ENCODE measurements at regions of chr17 and their contacts with region 1.

Region 1: GRCh38 chr17:42221937-42222745 is 27.8 kb upstream of the GHDC start:
- DNase-seq: peak; percentile 79
- ATAC-seq: peak; percentile 97
- H3K4me3 Mint-ChIP-seq: no peak overlapping the region
- H3K27ac Mint-ChIP-seq: peak overlapping the region; percentile 7
- H3K4me1 Mint-ChIP-seq: peaks cover 8% of the 10 kb centered on the region
- H3K27me3 Mint-ChIP-seq: no peaks in the 10 kb centered on the region
- CTCF ChIP-seq: peak; percentile 79

Region 2: GRCh38 chr17:42112552-42113176 is 109.5 kb before region 1 on chr17 and contains the start of gene DHX58:
- CTCF ChIA-PET with region 1: no interaction called
- POLR2A ChIA-PET with region 1: no interaction called
- intact Hi-C with region 1: no loop called
- DNase-seq: peak; percentile 89
- ATAC-seq: peak; percentile 82
- H3K4me3 Mint-ChIP-seq: peak within 1 kb of the TSS; percentile 79
- H3K27ac Mint-ChIP-seq: peak within 1 kb of the TSS; percentile 92
- H3K4me1 Mint-ChIP-seq: peaks cover 30% of the 10 kb centered on the region
- H3K27me3 Mint-ChIP-seq: no peaks in the 10 kb centered on the region
- CTCF ChIP-seq: no peak
- total RNA-seq, gene DHX58: 31.7 to 36.2 TPM

Region 3: GRCh38 chr17:42193969-42194899 is 27.9 kb before region 1 on chr17 and contains the start of gene GHDC:
- CTCF ChIA-PET with region 1: interaction called, 11 read pairs
- POLR2A ChIA-PET with region 1: interaction called, 3 read pairs
- intact Hi-C with region 1: no loop called
- DNase-seq: peak; percentile 90
- ATAC-seq: peak; percentile 98
- H3K4me3 Mint-ChIP-seq: peak within 1 kb of the TSS; percentile 88
- H3K27ac Mint-ChIP-seq: peak within 1 kb of the TSS; percentile 91
- H3K4me1 Mint-ChIP-seq: peaks cover 17% of the 10 kb centered on the region
- H3K27me3 Mint-ChIP-seq: no peaks in the 10 kb centered on the region
- CTCF ChIP-seq: no peak
- total RNA-seq, gene GHDC: 12.3 to 14.9 TPM

Region 4: GRCh38 chr17:42248351-42249179 is 26.4 kb after region 1 on chr17:
- CTCF ChIA-PET with region 1: interaction called, 25 read pairs
- POLR2A ChIA-PET with region 1: interaction called, 5 read pairs
- intact Hi-C with region 1: no loop called
- DNase-seq: peak; percentile 88
- ATAC-seq: peak; percentile 86
- H3K4me3 Mint-ChIP-seq: peak overlapping the region; percentile 77
- H3K27ac Mint-ChIP-seq: peak overlapping the region; percentile 98
- H3K4me1 Mint-ChIP-seq: peaks cover 69% of the 10 kb centered on the region
- H3K27me3 Mint-ChIP-seq: no peaks in the 10 kb centered on the region
- CTCF ChIP-seq: no peak

Region 5: DNA sequence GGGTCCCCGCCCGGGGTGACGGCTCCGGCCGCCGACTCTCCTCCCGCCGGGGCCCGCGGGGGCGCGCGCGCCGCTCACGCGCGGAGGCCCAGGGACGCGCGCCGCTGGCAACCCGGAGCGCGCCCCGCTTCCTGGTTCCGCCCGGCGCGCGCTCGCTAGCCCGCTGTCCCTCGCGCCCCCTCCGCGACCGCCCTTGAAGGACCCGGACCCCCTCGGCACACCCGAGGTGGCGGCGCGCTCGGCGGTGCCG is 54.1 kb after region 1 on chr17 and contains the start of gene STAT5B:
- CTCF ChIA-PET with region 1: interaction called, 37 read pairs
- POLR2A ChIA-PET with region 1: interaction called, 6 read pairs
- intact Hi-C with region 1: loop called (anchors 5 kb)
- DNase-seq: peak; percentile 64
- ATAC-seq: peak; percentile 65
- H3K4me3 Mint-ChIP-seq: peak within 1 kb of the TSS; percentile 97
- H3K27ac Mint-ChIP-seq: peak within 1 kb of the TSS; percentile 96
- H3K4me1 Mint-ChIP-seq: peaks cover 40% of the 10 kb centered on the region
- H3K27me3 Mint-ChIP-seq: no peaks in the 10 kb centered on the region
- CTCF ChIP-seq: no peak
- total RNA-seq, gene STAT5B: 128 to 129 TPM

Region 6: DNA sequence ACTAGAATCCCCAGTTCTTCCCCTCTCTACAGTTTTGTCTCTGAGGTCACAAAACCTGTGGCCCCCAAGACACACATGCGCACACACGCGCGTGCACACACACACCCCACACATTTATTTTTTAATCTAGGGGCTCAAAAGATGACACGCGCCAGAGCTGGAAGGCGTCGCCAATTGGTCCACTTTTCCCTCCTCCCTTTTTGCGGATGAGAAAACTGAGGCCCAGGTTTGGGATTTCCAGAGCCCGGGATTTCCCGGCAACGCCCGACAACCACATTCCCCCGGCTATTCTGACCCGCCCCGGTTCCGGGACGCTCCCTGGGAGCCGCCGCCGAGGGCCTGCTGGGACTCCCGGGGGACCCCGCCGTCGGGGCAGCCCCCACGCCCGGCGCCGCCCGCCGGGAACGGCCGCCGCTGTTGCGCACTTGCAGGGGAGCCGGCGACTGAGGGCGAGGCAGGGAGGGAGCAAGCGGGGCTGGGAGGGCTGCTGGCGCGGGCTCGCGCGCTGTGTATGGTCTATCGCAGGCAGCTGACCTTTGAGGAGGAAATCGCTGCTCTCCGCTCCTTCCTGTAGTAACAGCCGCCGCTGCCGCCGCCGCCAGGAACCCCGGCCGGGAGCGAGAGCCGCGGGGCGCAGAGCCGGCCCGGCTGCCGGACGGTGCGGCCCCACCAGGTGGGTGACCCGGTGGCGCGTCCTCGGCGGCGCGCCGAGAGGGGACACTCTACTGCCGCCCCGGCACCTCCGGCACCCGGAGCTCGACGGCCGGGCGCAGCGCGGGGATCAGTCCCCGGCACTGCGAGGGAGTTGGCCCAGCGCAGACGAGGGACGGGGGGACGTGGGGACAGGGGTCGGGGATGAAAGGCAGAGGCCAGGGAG is 66.0 kb after region 1 on chr17 and contains the start of gene STAT5A:
- CTCF ChIA-PET with region 1: interaction called, 32 read pairs
- POLR2A ChIA-PET with region 1: interaction called, 5 read pairs
- intact Hi-C with region 1: no loop called
- DNase-seq: peak; percentile 90
- ATAC-seq: peak; percentile 76
- H3K4me3 Mint-ChIP-seq: peak within 1 kb of the TSS; percentile 84
- H3K27ac Mint-ChIP-seq: peak within 1 kb of the TSS; percentile 94
- H3K4me1 Mint-ChIP-seq: peaks cover 54% of the 10 kb centered on the region
- H3K27me3 Mint-ChIP-seq: no peaks in the 10 kb centered on the region
- CTCF ChIP-seq: no peak
- total RNA-seq, gene STAT5A: 163 to 190 TPM

Region 7: DNA sequence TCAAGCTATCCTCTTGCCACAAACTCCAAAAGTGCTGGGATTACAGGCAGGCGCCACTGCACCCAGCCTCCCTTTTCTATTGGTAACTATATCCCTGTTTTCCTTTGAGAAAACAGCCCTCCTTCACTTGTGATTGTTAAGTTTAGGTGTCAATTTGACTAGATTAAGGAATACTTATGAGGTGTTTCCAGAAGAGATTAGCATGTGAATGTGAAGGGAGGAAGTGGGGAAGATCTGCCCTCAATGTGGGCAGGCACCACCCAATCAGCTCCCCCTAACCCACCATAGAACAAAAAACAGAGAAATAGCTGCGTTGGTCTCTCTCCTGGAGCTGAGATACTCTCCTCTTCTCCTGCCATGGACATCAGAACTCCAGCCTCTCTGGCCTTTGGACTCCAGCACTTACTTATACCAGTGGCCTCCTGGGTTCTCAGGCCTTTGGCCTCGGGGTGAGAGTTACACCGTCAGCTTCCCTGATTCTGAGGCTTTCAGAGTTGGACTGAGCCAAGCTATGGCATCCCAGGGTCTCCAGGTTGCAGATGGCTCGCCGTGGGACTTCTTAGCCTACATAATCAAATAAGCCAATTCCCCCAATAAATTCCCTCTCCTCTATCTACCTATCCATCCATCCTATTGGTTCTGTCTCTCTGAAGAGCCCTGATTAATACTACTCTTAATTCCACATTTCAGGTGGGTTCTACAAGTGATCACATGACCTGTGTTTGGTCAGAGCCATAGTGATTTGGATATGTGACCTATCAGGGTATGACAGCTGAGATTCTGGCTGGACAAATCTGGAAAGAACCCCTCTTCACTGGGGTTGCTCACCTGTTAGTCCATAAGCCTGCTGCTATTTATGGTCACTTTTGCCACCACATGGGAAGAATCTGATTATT is 178.1 kb after region 1 on chr17:
- CTCF ChIA-PET with region 1: interaction called, 49 read pairs
- POLR2A ChIA-PET with region 1: no interaction called
- intact Hi-C with region 1: no loop called
- DNase-seq: no peak
- ATAC-seq: peak; percentile 35
- H3K4me3 Mint-ChIP-seq: no peak overlapping the region
- H3K27ac Mint-ChIP-seq: peak overlapping the region; percentile 32
- H3K4me1 Mint-ChIP-seq: peaks cover 30% of the 10 kb centered on the region
- H3K27me3 Mint-ChIP-seq: no peaks in the 10 kb centered on the region
- CTCF ChIP-seq: no peak

Measured in activated CD8-positive, alpha-beta T cell treated with anti-CD3 and anti-CD28 coated beads for 36 hours (primary cell).